Sciatic nerve (tissue), 2 donors: ENCODE measurements at regions of chr17 and their contacts with region 1.

Region 1: DNA sequence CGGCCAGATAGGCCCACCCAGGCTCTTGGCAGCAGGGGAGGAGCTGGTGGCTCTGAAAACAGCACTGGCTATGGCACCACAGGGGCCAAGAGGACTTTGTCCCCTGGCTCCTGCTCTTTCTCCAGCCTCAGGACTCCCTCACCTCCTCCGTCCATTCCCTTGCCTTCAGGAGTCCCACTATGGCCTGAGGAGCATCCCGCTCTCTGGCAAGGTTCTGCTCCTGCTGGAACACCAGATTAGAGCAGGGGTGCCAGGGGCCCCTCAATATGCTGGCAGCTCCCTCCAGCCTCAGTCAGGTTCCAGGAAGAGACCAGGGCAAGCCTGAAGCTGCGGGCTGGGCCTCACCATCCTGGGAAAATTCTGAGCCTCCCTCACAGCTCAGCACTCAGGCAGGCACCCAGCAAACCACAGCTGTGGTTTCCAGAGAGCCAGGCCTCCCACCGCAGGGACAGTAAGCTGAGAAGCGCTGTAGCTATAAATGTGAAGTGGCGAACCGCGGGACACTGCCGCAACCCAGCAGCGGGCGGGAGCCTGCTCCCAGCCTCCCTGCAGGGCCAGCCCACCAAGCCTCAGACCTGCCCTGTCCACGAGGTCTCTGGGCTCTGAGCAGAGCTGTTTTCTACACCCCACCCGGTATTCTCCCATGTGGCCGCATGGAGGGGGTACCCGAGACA is 25.7 kb downstream of the C17orf100 start:
- DNase-seq: no peak
- ATAC-seq: no peak

Region 2: DNA sequence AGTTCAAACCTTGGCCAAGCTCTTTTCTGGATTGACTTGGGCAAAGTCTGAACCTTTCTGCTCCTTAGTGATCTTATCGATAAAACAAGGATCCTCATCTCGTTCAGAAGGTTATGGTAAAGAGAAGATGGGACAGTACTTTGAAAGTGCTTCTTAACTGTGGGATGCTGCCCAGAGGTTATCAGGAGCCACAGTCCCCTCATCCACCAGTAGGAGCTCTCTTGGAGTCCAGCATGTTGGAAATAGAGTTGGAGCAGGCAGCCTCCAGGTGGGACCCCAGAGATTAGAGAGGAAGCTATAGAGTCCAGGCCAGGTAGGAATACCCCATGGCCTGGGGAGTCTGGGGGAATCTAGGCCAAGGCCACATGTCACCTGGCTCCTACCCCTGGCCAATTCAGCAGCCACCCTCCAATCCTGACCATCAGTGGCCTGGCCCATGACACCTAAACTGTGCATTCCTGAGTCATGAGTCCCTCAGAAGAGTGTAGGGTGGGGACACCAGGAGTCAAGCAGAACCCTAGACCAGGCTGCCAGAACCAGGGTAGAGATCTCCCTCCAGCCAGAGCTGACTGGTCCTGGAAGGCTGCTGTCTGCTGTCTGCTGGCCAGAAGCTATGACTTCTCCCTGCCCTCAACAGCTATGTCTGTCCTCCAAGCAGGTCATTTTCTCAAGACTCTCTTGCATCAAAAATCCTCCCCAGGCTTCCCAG is 386.7 kb before region 1 on chr17:
- intact Hi-C with region 1: no loop called
- DNase-seq: no peak
- ATAC-seq: no peak

Region 3: GRCh38 chr17:6843241-6843880 is 166.1 kb after region 1 on chr17:
- intact Hi-C with region 1: loop called (anchors 10 kb)
- DNase-seq: no peak
- ATAC-seq: peak; percentile 64

Region 4: DNA sequence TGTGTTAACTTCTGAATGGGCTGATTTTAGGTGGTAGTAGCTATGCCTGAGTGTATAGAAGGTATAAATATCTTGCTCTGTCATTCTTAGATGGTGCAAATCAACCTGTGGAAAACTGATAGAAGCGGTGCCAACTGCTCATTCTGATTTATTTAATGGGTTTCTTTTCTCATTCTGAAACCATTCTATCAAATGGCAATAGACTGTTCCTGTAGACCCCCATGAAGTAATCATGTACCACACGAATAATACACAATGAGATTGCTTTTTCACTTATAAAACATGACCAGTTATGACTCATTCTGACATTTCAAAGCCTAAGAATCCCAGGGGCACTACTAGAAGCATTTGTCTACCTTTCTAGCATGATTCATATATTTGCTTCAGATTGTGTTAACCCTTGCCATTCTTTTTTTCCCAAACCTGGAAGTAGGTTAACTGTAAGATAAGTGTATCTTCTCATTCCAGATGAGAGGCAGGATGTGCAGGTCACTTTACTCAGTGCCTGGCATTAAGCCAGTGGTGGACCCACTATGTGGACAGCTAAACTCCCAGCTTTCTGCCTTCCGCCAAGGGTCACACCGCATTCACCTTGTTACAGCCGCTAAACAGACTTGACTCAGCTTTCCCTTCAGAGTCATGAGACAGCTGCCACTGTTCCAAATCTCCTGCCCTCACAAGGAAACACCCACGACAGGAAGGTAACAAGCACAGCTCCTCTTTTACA is 383.0 kb after region 1 on chr17:
- intact Hi-C with region 1: no loop called
- DNase-seq: no peak
- ATAC-seq: no peak